ENCODE measurements at regions of chr1 and their contacts with region 1.

Region 1: DNA sequence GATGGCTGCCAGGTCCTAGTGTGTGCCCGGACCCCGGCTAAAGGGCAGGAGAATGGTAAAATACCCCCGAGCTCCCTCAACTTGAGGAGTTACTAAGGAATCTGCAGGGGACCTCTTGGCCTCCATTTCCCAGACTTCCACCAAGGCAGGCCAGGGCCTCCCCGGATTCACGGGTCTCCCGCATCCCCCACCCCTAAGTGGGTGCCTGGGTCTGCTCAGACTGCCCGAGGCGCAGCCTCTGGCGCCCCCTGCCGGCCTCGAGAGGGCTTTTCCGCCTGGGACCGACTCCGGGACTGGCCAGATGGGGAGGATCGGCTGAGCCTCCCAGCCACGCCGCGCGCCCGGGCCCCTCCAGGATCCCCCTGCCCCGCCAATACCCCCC is 1.7 kb downstream of the PLEKHG5 start:
- DNase-seq: peak; percentile 57 to 84 (median 75)
- ATAC-seq: peak; percentile 62 to 70
- H3K4me3 Mint-ChIP-seq: peak overlapping the region; percentile 68 to 87 (median 76)
- H3K27ac Mint-ChIP-seq: peak overlapping the region in 3 of 10 donors; percentile 19 to 67 (median 58)
- H3K4me1 Mint-ChIP-seq: peaks cover 25 to 43% (median 30%) of the 10 kb centered on the region in 4 donors
- H3K27me3 Mint-ChIP-seq: peaks cover 5 to 31% (median 18%) of the 10 kb centered on the region in 5 donors

Region 2: GRCh38 chr1:6280761-6281451 is 208.9 kb before region 1 on chr1:
- POLR2A ChIA-PET with region 1: no interaction called
- DNase-seq: no peak
- ATAC-seq: no peak
- H3K4me3 Mint-ChIP-seq: no peak overlapping the region
- H3K27ac Mint-ChIP-seq: no peak overlapping the region
- H3K4me1 Mint-ChIP-seq: peaks cover 0 to 5% (median 1%) of the 10 kb centered on the region in 4 donors
- H3K27me3 Mint-ChIP-seq: no peaks in the 10 kb centered on the region

Region 3: DNA sequence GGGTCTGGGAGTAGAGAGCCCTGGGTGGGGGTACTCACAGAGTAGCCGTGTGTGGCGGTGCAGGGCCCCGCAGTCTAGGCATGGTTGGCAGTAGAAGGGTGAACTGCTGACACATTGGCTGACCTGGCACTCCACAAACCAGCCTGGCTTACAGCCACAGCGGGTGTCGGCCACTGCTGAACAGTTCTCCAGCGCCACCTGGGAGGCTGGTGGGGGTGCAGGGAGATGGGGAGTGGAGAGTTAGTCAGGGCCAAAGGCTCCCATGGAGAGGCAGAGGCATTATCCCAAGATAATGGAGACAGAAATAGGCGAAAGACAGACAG is 25.3 kb before region 1 on chr1:
- POLR2A ChIA-PET with region 1: interaction called, 30 read pairs
- DNase-seq: no peak
- ATAC-seq: no peak
- H3K4me3 Mint-ChIP-seq: peak overlapping the region; percentile 88 to 97 (median 91)
- H3K27ac Mint-ChIP-seq: peak overlapping the region; percentile 87 to 96 (median 92)
- H3K4me1 Mint-ChIP-seq: peaks cover 29 to 57% (median 48%) of the 10 kb centered on the region in 4 donors
- H3K27me3 Mint-ChIP-seq: peaks cover 0 to 4% (median 0%) of the 10 kb centered on the region in 5 donors

Region 4: GRCh38 chr1:6509919-6510291 is 20.1 kb after region 1 on chr1:
- POLR2A ChIA-PET with region 1: no interaction called
- DNase-seq: no peak
- ATAC-seq: no peak
- H3K4me3 Mint-ChIP-seq: no peak overlapping the region
- H3K27ac Mint-ChIP-seq: peak overlapping the region in 1 of 10 donors; percentile 66
- H3K4me1 Mint-ChIP-seq: no peaks in the 10 kb centered on the region
- H3K27me3 Mint-ChIP-seq: peaks cover 0 to 9% (median 0%) of the 10 kb centered on the region in 5 donors

Region 5: GRCh38 chr1:6523566-6523965 is 33.8 kb after region 1 on chr1:
- POLR2A ChIA-PET with region 1: interaction called, 11 read pairs
- DNase-seq: no peak
- ATAC-seq: no peak
- H3K4me3 Mint-ChIP-seq: no peak overlapping the region
- H3K27ac Mint-ChIP-seq: peak overlapping the region in 6 of 10 donors; percentile 10 to 77 (median 49)
- H3K4me1 Mint-ChIP-seq: peaks cover 0 to 7% (median 0%) of the 10 kb centered on the region in 4 donors
- H3K27me3 Mint-ChIP-seq: no peaks in the 10 kb centered on the region

Region 6: GRCh38 chr1:6547301-6547700 is 57.5 kb after region 1 on chr1:
- POLR2A ChIA-PET with region 1: interaction called, 30 read pairs
- DNase-seq: no peak
- ATAC-seq: no peak
- H3K4me3 Mint-ChIP-seq: peak overlapping the region in 2 of 10 donors; percentile 37 to 38
- H3K27ac Mint-ChIP-seq: peak overlapping the region; percentile 84 to 96 (median 93)
- H3K4me1 Mint-ChIP-seq: peaks cover 16 to 39% (median 32%) of the 10 kb centered on the region in 4 donors
- H3K27me3 Mint-ChIP-seq: no peaks in the 10 kb centered on the region

Region 7: GRCh38 chr1:6554031-6554906 is 64.5 kb after region 1 on chr1 and contains the start of gene NOL9:
- POLR2A ChIA-PET with region 1: interaction called, 43 read pairs
- DNase-seq: peak; percentile 91 to 96 (median 95)
- ATAC-seq: peak; percentile 98
- H3K4me3 Mint-ChIP-seq: peak within 1 kb of the TSS; percentile 71 to 87 (median 78)
- H3K27ac Mint-ChIP-seq: peak within 1 kb of the TSS; percentile 61 to 89 (median 82)
- H3K4me1 Mint-ChIP-seq: peaks cover 0 to 28% (median 17%) of the 10 kb centered on the region in 4 donors
- H3K27me3 Mint-ChIP-seq: no peaks in the 10 kb centered on the region
- polyA plus RNA-seq, gene NOL9: 10.4 to 19.4 (median 18.5) TPM